ENCODE measurements at regions of chr21 and their contacts with region 1.

Region 1: DNA sequence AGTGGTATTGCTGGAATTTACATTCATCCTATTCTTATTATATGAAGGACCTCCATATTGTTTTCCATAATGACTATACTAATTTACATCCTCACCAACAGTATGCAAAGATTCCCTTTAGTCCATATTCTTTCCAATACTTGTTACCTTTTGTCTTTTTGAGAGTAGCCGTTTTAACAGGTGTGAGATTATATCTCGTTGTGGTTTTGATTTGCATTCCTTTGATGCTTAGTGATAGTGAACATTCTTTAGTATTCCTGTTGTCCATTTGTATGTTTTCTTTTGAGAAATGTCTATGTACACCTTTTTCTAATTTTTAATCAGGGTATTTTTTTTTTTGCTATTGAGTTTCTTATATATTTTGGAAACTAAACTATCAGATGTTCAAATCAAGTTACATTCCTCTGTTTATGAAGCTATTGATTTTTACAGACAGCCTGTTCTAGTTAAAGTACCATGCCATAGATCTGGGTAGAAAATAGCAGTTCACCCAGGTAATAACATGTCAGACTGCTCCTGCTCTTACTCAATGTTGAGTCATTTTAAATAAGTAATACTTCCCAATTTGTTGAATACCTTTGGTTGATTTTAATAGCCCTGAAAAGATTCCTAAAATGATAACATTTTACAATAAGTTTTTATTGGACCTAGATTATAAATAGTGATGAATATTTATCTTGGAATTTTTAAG is 1108.7 kb downstream of the NCAM2 start:
- DNase-seq: no peak
- ATAC-seq: no peak
- H3K4me3 ChIP-seq: no peak overlapping the region
- H3K27ac ChIP-seq: no peak overlapping the region
- H3K4me1 ChIP-seq: no peaks in the 10 kb centered on the region
- H3K27me3 ChIP-seq: no peaks in the 10 kb centered on the region
- CTCF ChIP-seq: no peak

Region 2: GRCh38 chr21:21888931-21889330 is 217.9 kb before region 1 on chr21:
- intact Hi-C with region 1: no loop called
- DNase-seq: no peak
- ATAC-seq: no peak
- H3K4me3 ChIP-seq: no peak overlapping the region
- H3K27ac ChIP-seq: no peak overlapping the region
- H3K4me1 ChIP-seq: no peaks in the 10 kb centered on the region
- H3K27me3 ChIP-seq: no peaks in the 10 kb centered on the region
- CTCF ChIP-seq: no peak

Region 3: GRCh38 chr21:22154579-22155274 is 47.9 kb after region 1 on chr21:
- intact Hi-C with region 1: loop called in 1 of 10 experiments (anchors 2 kb)
- DNase-seq: no peak
- ATAC-seq: no peak
- H3K4me3 ChIP-seq: no peak overlapping the region
- H3K27ac ChIP-seq: no peak overlapping the region
- H3K4me1 ChIP-seq: no peaks in the 10 kb centered on the region
- H3K27me3 ChIP-seq: no peaks in the 10 kb centered on the region
- CTCF ChIP-seq: no peak

Measured in heart right ventricle (tissue), 16 donors.